Mucosa of descending colon (tissue), 3 donors: ENCODE measurements at regions of chr14 and their contacts with region 1.

Region 1: DNA sequence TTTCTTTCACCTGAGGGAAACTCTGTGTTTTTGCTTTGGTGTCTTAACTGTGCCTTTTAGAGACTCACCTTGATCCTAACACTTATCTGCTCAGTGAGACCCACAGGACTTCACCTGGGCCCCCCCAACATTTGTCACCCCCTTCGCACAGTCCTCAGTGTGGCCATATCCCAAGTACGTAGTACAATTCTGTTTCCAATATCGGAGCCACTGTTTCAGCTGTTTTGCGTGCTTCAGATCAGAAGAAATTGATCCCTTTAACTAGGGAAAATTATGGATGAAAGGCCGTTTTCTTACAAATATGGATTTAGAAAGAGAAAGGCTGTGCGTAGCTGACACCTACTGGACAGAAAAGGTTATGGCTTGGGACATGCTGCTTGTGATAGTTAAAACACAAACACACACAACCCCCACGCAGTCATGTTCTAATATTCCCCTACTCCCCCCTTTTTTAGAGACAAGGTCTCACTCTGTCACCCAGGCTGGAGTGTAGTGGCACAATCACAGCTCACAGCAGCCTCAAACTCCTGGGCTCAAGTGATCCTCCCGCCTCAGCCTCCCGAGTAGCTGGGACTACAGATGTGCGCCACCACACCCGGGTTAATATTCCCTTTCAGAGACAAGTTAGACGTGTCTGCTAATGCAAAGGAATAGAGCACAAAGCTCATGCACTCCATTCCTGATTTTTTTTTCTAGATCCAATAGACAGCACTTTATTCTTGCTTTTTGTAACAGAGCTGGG is 3.6 kb upstream of the SLC7A8 start:
- DNase-seq: peak in 1 of 3 donors; percentile 78
- ATAC-seq: peak; percentile 69
- H3K4me3 ChIP-seq: no peak overlapping the region
- H3K4me1 ChIP-seq: no peaks in the 10 kb centered on the region
- CTCF ChIP-seq: peak; percentile 49

Region 2: GRCh38 chr14:23120541-23121251 is 66.4 kb before region 1 on chr14:
- intact Hi-C with region 1: loop called (anchors 1 to 2 kb)
- DNase-seq: peak; percentile 90 to 93 (median 92)
- ATAC-seq: peak; percentile 92
- H3K4me3 ChIP-seq: no peak overlapping the region
- H3K4me1 ChIP-seq: no peaks in the 10 kb centered on the region
- CTCF ChIP-seq: peak; percentile 99

Region 3: GRCh38 chr14:23286020-23286905 is 99.2 kb after region 1 on chr14 and contains the start of gene HOMEZ:
- intact Hi-C with region 1: no loop called
- DNase-seq: peak; percentile 99
- ATAC-seq: peak; percentile 98
- H3K4me3 ChIP-seq: peak within 1 kb of the TSS; percentile 76
- H3K4me1 ChIP-seq: peaks cover 11% of the 10 kb centered on the region
- CTCF ChIP-seq: no peak
- total RNA-seq, gene HOMEZ: 15.3 to 18.3 (median 17.3) TPM

Region 4: DNA sequence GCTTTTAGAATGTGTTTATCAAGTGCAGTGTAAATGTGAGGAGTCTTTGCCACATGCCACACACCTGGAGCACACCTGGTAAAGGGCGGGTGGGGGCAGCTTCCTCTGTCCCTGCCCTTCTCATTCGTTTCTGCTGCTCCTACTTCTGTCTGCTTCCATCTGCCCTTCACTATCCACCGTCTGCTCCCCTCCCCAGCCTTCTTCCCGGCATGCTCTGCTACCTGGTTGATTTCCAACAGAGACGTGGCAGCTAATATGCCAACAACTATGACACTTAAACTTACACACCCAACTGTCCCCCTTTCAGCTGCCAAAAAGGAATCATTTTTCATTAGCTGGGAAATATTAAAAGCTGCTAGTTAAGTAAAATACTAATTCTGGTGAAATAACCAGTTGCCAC is 855.7 kb after region 1 on chr14:
- intact Hi-C with region 1: no loop called
- DNase-seq: no peak
- ATAC-seq: no peak
- H3K4me3 ChIP-seq: no peak overlapping the region
- H3K4me1 ChIP-seq: peaks cover 2% of the 10 kb centered on the region
- CTCF ChIP-seq: no peak